ENCODE measurements at regions of chr1 and their contacts with region 1.

Region 1: GRCh38 chr1:39754906-39755504 is 16.1 kb downstream of the OXCT2 start:
- DNase-seq: no peak
- ATAC-seq: no peak
- H3K4me3 ChIP-seq: no peak overlapping the region
- H3K27ac ChIP-seq: no peak overlapping the region
- H3K4me1 ChIP-seq: no peaks in the 10 kb centered on the region
- H3K27me3 ChIP-seq: no peaks in the 10 kb centered on the region
- CTCF ChIP-seq: no peak

Region 2: GRCh38 chr1:39866767-39867166 is 111.8 kb after region 1 on chr1:
- CTCF ChIA-PET with region 1: no interaction called
- POLR2A ChIA-PET with region 1: interaction called, 11 read pairs
- in situ Hi-C with region 1: no loop called
- intact Hi-C with region 1: no loop called
- DNase-seq: no peak
- ATAC-seq: no peak
- H3K4me3 ChIP-seq: no peak overlapping the region
- H3K27ac ChIP-seq: no peak overlapping the region
- H3K4me1 ChIP-seq: no peaks in the 10 kb centered on the region
- H3K27me3 ChIP-seq: no peaks in the 10 kb centered on the region
- CTCF ChIP-seq: no peak